ENCODE measurements at regions of chr22 and their contacts with region 1.

Region 1: GRCh38 chr22:40289991-40290459 is 56.3 kb upstream of the ADSL start:
- DNase-seq: peak; percentile 60
- H3K4me3 Mint-ChIP-seq: peak overlapping the region; percentile 63
- H3K27ac Mint-ChIP-seq: peak overlapping the region; percentile 94
- H3K4me1 Mint-ChIP-seq: peaks cover 49% of the 10 kb centered on the region
- H3K27me3 Mint-ChIP-seq: no peaks in the 10 kb centered on the region

Region 2: DNA sequence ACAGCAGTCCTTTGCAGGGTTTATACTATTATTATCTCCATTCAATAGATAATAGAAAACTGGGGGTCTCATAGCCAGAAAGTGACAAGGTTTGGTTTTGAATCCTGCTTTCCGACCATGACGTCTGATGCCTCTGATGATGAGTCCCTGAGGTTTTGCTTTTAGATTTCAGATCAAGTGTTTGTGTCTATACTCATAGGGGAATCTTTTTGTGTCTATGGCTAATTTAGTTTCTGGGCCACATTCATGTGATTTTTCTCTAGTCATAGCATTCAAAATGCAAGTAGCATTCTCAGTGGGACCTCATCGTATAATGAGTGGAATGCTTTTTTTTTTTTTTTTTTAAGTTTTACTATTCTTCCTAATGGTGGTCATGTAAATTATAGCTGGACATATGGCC is 39.4 kb before region 1 on chr22:
- intact Hi-C with region 1: loop called (anchors 2 kb)
- DNase-seq: no peak
- H3K4me3 Mint-ChIP-seq: no peak overlapping the region
- H3K27ac Mint-ChIP-seq: peak overlapping the region; percentile 51
- H3K4me1 Mint-ChIP-seq: peaks cover 54% of the 10 kb centered on the region
- H3K27me3 Mint-ChIP-seq: no peaks in the 10 kb centered on the region

Region 3: DNA sequence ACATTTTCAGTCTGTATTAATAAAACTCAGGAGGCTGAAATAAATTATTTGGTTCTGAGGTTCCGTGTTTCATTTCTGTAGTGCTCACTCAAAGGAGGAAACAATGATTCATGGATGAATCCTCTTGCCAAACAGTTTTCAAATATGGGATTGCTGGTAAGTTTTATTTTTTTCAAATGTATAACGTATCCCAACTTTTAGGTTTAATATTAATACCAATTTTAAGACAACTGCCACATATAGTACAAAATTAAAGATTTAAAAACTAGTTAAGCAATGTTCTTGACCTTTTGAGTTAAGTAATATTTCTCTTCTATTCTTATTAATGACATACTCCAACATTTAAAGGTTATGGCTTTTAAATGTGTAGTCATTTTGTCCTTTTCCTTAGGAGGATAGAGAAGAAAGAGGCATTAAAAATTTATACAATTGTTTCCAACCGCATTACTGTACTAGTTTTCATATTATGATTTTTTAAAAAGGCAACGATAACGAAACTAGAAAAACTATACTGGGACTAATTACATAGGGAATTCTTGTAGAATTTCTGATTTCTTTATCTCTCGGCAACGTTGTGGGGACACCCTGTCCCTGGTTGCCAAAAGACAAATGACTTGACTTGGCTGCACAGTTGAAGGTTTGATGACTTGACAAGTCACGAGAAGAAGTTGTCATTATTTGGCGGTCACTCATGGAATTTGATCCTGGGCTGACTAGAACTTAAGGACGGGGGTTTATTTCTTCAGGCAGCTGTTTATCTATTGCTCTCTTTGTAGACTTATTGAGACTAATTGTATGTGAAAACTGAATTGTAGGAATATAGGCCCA is 12.8 kb before region 1 on chr22:
- intact Hi-C with region 1: loop called (anchors 1 kb)
- DNase-seq: no peak
- H3K4me3 Mint-ChIP-seq: no peak overlapping the region
- H3K27ac Mint-ChIP-seq: no peak overlapping the region
- H3K4me1 Mint-ChIP-seq: peaks cover 19% of the 10 kb centered on the region
- H3K27me3 Mint-ChIP-seq: no peaks in the 10 kb centered on the region

Measured in activated T-helper 2 cell treated with anti-CD3 and anti-CD28 coated beads, Interferon-gamma antibody, Interleukin-2, Interleukin-4, amounts not matched to agents 10 μg/mL and 5 μg/mL and 100 μg/mL, durations not matched to agents 14 hours and 24 hours and 36 hours (primary cell).